Caco-2 (cell line): ENCODE measurements at regions of chr13 and their contacts with region 1.

Region 1: DNA sequence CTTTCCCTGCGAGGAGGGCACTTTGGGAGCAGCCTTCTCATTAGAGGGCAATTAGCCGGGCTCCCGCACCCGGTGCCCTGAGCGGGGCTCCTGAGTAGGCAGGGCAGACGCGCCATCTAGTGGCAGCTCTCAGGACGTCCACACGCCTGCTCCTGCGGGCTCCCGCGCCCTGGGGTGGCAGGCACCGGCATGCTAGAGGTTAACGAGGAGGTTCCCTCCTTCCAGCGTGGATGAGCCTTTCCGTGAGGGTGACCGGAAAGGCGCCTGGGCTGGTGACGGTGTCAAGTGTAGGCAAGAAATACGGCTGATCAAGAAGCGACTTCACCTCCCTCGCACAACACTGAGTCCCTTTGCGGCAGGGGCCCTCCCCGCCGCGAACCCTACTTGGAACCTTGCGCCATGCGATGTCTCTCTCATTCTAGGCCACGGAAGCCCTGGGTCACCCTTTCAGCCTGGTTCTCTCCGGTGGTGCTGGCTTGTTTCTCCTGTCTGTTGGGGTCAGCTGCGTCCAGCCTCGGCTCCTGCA is 67.7 kb downstream of the ALOX5AP start:
- DNase-seq: peak; percentile 81 to 87
- H3K4me3 ChIP-seq: peak overlapping the region; percentile 27
- H3K4me3 Mint-ChIP-seq: peak overlapping the region; percentile 62
- H3K27ac Mint-ChIP-seq: no peak overlapping the region
- H3K4me1 ChIP-seq: peaks cover 5% of the 10 kb centered on the region; the same call in 1 of the 2 replicates
- H3K4me1 Mint-ChIP-seq: no peaks in the 10 kb centered on the region
- H3K27me3 ChIP-seq: no peaks in the 10 kb centered on the region
- H3K27me3 Mint-ChIP-seq: no peaks in the 10 kb centered on the region
- CTCF ChIP-seq: peak; percentile 93 to 96

Region 2: GRCh38 chr13:30088312-30088855 is 714.6 kb before region 1 on chr13:
- CTCF ChIA-PET with region 1: no interaction called
- POLR2A ChIA-PET with region 1: no interaction called
- intact Hi-C with region 1: no loop called
- DNase-seq: no peak
- H3K4me3 ChIP-seq: no peak overlapping the region
- H3K4me3 Mint-ChIP-seq: no peak overlapping the region
- H3K27ac Mint-ChIP-seq: no peak overlapping the region
- H3K4me1 ChIP-seq: no peaks in the 10 kb centered on the region
- H3K4me1 Mint-ChIP-seq: no peaks in the 10 kb centered on the region
- H3K27me3 ChIP-seq: no peaks in the 10 kb centered on the region
- H3K27me3 Mint-ChIP-seq: no peaks in the 10 kb centered on the region
- CTCF ChIP-seq: no peak

Region 3: GRCh38 chr13:30465585-30466357 is 337.2 kb before region 1 on chr13 and contains the start of gene HMGB1:
- CTCF ChIA-PET with region 1: no interaction called
- POLR2A ChIA-PET with region 1: no interaction called
- intact Hi-C with region 1: loop called (anchors 10 kb)
- DNase-seq: peak; percentile 98 to 99
- H3K4me3 ChIP-seq: peak within 1 kb of the TSS; percentile 52
- H3K4me3 Mint-ChIP-seq: peak within 1 kb of the TSS; percentile 98
- H3K27ac Mint-ChIP-seq: peak within 1 kb of the TSS; percentile 100
- H3K4me1 ChIP-seq: peaks cover 12% of the 10 kb centered on the region
- H3K4me1 Mint-ChIP-seq: no peaks in the 10 kb centered on the region
- H3K27me3 ChIP-seq: no peaks in the 10 kb centered on the region
- H3K27me3 Mint-ChIP-seq: peaks cover 2% of the 10 kb centered on the region
- CTCF ChIP-seq: no peak
- total RNA-seq, gene HMGB1: 569 and 598 TPM in 2 replicates

Region 4: GRCh38 chr13:30679483-30680330 is 123.3 kb before region 1 on chr13:
- CTCF ChIA-PET with region 1: no interaction called
- POLR2A ChIA-PET with region 1: no interaction called
- intact Hi-C with region 1: loop called (anchors 2 kb)
- DNase-seq: peak in 1 of 2 experiments; percentile 44
- H3K4me3 ChIP-seq: no peak overlapping the region
- H3K4me3 Mint-ChIP-seq: no peak overlapping the region
- H3K27ac Mint-ChIP-seq: no peak overlapping the region
- H3K4me1 ChIP-seq: no peaks in the 10 kb centered on the region
- H3K4me1 Mint-ChIP-seq: peaks cover 9% of the 10 kb centered on the region
- H3K27me3 ChIP-seq: no peaks in the 10 kb centered on the region
- H3K27me3 Mint-ChIP-seq: no peaks in the 10 kb centered on the region
- CTCF ChIP-seq: peak; percentile 62 to 66

Region 5: DNA sequence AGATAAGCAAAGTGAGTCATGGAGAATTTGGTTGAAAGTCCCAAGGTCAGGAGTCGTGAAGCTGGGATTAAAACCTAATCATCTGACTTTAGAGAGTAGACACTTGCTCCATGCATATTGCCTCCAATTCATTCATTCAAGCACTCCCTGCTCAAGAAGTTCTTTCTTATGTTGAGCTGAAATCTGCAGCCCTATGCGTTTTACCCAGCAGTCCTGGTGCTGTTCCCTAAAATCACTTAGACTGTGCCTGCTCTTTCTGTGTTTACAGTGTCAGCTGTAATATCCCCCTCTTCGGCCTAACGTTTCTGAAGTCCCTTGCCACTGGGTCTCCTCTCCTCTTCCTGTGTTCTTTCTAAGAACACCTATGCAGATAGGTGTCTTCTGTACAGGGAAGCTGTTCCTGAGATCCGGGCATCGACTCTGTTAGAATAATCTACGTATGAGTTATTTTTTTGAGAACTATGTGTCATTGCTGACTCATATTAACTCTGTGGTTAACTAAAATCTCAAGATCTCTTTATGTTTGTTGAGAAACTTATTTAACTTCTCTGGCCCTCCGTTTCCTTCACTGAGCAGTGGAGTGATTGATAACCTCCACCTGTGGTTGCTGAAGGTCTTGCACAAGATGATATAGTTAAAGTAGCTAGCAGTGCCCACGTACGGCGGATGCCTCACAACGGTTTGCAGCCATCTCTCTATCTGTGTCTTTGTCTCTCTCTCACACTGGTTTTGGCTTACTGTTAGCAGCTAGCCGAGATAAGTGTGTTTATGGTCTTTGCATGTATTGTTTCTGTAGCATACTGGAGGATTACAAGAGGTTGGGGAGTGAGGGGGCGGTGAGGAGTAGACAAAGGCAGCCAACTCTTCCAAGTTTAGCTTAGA is 63.0 kb before region 1 on chr13:
- CTCF ChIA-PET with region 1: no interaction called
- POLR2A ChIA-PET with region 1: no interaction called
- intact Hi-C with region 1: loop called (anchors 5 kb)
- DNase-seq: peak in 1 of 2 experiments; percentile 14
- H3K4me3 ChIP-seq: no peak overlapping the region
- H3K4me3 Mint-ChIP-seq: no peak overlapping the region
- H3K27ac Mint-ChIP-seq: peak overlapping the region; percentile 22
- H3K4me1 ChIP-seq: peaks cover 38% of the 10 kb centered on the region
- H3K4me1 Mint-ChIP-seq: peaks cover 32% of the 10 kb centered on the region
- H3K27me3 ChIP-seq: no peaks in the 10 kb centered on the region
- H3K27me3 Mint-ChIP-seq: no peaks in the 10 kb centered on the region
- CTCF ChIP-seq: no peak

Region 6: DNA sequence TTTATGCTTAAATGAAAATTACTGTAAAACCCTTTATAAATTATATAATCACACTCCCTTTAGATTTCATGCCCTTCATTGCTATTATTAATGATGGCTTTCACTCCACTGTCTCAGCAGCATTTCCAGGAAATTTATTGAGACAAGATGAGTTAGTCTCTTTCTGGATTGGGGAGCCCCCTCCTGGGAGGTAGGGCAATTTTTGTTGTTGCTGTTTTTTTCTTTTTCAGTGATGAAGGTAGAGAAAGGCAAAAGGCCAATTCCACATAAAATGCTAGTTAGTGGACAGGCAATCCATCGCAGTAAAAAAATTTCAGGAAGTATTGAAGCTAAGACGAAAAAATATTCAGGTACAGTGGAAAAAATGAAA is 209.6 kb after region 1 on chr13:
- CTCF ChIA-PET with region 1: no interaction called
- POLR2A ChIA-PET with region 1: no interaction called
- intact Hi-C with region 1: loop called (anchors 10 kb)
- DNase-seq: peak in 1 of 2 experiments; percentile 39
- H3K4me3 ChIP-seq: no peak overlapping the region
- H3K4me3 Mint-ChIP-seq: no peak overlapping the region
- H3K27ac Mint-ChIP-seq: no peak overlapping the region
- H3K4me1 ChIP-seq: no peaks in the 10 kb centered on the region
- H3K4me1 Mint-ChIP-seq: no peaks in the 10 kb centered on the region
- H3K27me3 ChIP-seq: no peaks in the 10 kb centered on the region
- H3K27me3 Mint-ChIP-seq: peaks cover 9% of the 10 kb centered on the region
- CTCF ChIP-seq: peak; percentile 24 to 51